OCI-LY7 (cell line): ENCODE measurements at regions of chr3 and their contacts with region 1.

Region 1: GRCh38 chr3:149163066-149163465 is 33.6 kb downstream of the HPS3 start:
- DNase-seq: peak; percentile 13
- H3K4me3 ChIP-seq: no peak overlapping the region
- H3K27ac ChIP-seq: no peak overlapping the region
- H3K4me1 ChIP-seq: peaks cover 6% of the 10 kb centered on the region
- CTCF ChIP-seq: no peak

Region 2: DNA sequence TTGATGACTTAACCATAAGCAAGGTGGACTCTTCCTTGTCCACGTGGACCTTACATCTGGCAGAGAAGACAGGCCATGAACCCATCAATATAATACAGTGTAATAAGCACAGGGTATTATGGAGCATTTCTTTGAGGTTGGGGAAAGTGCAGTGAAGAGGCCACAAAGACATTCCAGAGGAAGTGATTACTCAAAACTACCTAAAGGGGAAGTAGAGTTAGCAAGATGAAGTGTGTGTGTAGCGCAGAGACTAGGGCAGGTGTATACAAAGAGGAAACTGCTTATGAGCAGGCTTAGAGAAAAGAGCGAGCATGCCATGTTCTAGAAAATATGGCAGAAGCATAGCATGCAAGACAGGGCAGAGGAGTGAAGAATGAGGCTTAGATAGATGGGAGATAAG is 40.7 kb after region 1 on chr3:
- CTCF ChIA-PET with region 1: no interaction called
- POLR2A ChIA-PET with region 1: no interaction called
- intact Hi-C with region 1: loop called (anchors 2 kb)
- DNase-seq: peak; percentile 79
- H3K4me3 ChIP-seq: no peak overlapping the region
- H3K27ac ChIP-seq: no peak overlapping the region
- H3K4me1 ChIP-seq: peaks cover 14% of the 10 kb centered on the region
- CTCF ChIP-seq: 0 out of 2 replicates have a peak, but pooled peaks have one; percentile 17

Region 3: GRCh38 chr3:149771652-149772271 is 608.7 kb after region 1 on chr3:
- CTCF ChIA-PET with region 1: no interaction called
- POLR2A ChIA-PET with region 1: no interaction called
- intact Hi-C with region 1: no loop called
- DNase-seq: peak; percentile 45
- H3K4me3 ChIP-seq: no peak overlapping the region
- H3K27ac ChIP-seq: no peak overlapping the region
- H3K4me1 ChIP-seq: no peaks in the 10 kb centered on the region
- CTCF ChIP-seq: peak; percentile 86